A673 (cell line): ENCODE measurements at regions of chr20 and their contacts with region 1.

Region 1: DNA sequence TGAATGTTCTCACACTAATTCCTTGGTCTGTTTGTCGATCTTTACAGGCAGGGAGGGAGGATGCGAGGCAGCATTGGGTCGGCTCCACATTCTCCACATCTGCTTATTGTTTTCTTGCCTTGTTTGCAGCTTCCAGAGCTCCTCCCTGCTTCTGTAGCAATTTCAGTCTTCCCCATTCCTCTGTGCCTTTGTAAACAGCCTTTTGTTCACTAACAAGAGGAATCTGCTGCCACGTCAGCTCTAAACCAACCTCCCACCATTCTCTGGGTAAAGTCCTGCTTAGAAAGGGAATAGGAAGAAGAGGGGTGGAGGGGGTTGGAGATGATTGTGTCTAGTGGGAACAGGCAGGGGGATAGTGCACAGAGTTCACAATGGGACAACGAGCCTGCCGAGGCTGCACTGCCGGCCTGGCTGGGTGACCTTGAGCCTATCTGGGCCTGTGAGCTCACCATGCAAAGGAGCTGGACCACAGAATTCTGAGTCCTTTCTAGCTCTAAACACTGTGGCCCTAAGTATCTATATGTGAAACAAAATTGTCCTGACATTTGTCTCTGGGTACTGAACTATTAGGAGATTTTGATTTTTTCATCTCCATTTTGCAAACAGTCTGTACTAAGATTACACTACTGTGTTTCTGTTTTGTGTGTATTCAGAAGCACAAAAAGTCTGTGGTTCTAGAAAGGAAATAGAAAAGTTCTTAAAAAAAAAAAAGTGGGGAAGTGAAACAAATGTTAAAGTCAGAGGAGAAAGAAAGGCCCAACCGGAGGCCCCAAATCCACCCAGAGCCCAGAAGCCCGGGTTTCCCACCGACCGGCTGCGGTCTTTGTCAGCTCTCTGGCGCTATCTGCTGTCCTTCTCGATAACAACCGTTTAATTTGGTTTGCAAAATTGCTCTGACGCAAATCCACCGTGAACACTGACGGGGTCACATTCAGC is 1.4 kb upstream of the PRND start:
- DNase-seq: peak; percentile 88
- H3K4me3 ChIP-seq: no peak overlapping the region
- H3K27ac ChIP-seq: peak overlapping the region; percentile 58
- H3K4me1 ChIP-seq: peaks cover 6% of the 10 kb centered on the region
- H3K27me3 ChIP-seq: no peaks in the 10 kb centered on the region
- CTCF ChIP-seq: peak; percentile 82

Region 2: DNA sequence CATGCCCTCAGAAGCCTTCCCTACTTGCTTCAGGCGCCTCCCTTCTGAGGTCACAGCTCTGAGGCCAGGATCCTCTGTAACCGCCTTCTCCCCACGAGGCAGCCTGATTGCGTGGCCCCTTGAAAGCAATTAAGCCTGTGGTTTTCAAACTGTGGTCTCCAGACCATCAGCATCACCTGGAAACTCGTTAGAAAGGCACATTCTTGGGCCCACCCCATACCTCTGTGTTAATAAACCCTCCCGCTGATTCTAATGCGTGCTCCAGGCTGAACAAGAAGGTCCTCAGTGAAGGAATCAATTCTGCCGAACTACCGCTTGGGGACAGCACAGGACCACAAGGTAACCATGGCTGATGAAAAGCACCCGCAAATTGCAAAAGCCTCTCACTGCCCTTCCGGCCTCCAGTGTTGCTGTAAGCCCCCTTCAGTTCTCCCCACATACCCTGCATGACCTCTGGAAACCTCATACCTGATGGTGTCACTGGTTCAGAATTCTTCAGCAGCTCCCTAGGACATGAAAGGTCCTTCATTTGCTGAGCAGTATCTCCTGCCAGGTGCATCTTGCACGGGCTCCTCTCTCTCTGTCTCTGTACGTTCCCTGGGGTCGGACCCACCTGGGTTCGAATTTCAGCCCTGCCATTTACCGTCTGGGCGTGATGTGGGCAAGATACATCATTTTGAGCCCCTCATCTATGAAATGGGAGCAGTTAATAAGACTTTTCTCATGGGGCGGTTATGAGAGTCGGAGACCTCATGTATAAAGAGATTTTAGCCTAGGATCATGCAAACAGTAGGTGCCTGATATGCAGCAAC is 611.6 kb before region 1 on chr20:
- CTCF ChIA-PET with region 1: no interaction called
- POLR2A ChIA-PET with region 1: no interaction called
- intact Hi-C with region 1: loop called (anchors 2 kb)
- DNase-seq: peak; percentile 88
- H3K4me3 ChIP-seq: no peak overlapping the region
- H3K27ac ChIP-seq: peak overlapping the region; percentile 58
- H3K4me1 ChIP-seq: peaks cover 30% of the 10 kb centered on the region
- H3K27me3 ChIP-seq: no peaks in the 10 kb centered on the region
- CTCF ChIP-seq: peak; percentile 94

Region 3: GRCh38 chr20:4592316-4593148 is 127.8 kb before region 1 on chr20:
- CTCF ChIA-PET with region 1: no interaction called
- POLR2A ChIA-PET with region 1: no interaction called
- intact Hi-C with region 1: no loop called
- DNase-seq: peak; percentile 88
- H3K4me3 ChIP-seq: peak overlapping the region; percentile 41
- H3K27ac ChIP-seq: peak overlapping the region; percentile 85
- H3K4me1 ChIP-seq: peaks cover 36% of the 10 kb centered on the region
- H3K27me3 ChIP-seq: no peaks in the 10 kb centered on the region
- CTCF ChIP-seq: peak; percentile 77

Region 4: GRCh38 chr20:4613718-4614620 is 106.3 kb before region 1 on chr20:
- CTCF ChIA-PET with region 1: interaction called, 11 read pairs
- POLR2A ChIA-PET with region 1: no interaction called
- intact Hi-C with region 1: loop called (anchors 1 kb)
- DNase-seq: peak; percentile 81
- H3K4me3 ChIP-seq: no peak overlapping the region
- H3K27ac ChIP-seq: no peak overlapping the region
- H3K4me1 ChIP-seq: peaks cover 7% of the 10 kb centered on the region
- H3K27me3 ChIP-seq: no peaks in the 10 kb centered on the region
- CTCF ChIP-seq: peak; percentile 66